ENCODE measurements at regions of chr18 and their contacts with region 1.

Region 1: GRCh38 chr18:3297025-3297984 is 35.4 kb downstream of the MYL12B start:
- DNase-seq: peak; percentile 88 to 95 (median 90)
- H3K4me3 ChIP-seq: peak overlapping the region; percentile 71 to 86
- H3K4me3 Mint-ChIP-seq: peak overlapping the region; percentile 91 to 98 (median 94)
- H3K27ac ChIP-seq: peak overlapping the region; percentile 44
- H3K27ac Mint-ChIP-seq: peak overlapping the region; percentile 51 to 96 (median 90)
- H3K4me1 ChIP-seq: peaks cover 9% of the 10 kb centered on the region
- H3K4me1 Mint-ChIP-seq: peaks cover 2 to 15% (median 10%) of the 10 kb centered on the region in 4 donors
- H3K27me3 ChIP-seq: no peaks in the 10 kb centered on the region
- H3K27me3 Mint-ChIP-seq: peaks cover 8 to 13% of the 10 kb centered on the region in 2 donors

Region 2: GRCh38 chr18:2935438-2936192 is 361.7 kb before region 1 on chr18:
- CTCF ChIA-PET with region 1: no interaction called
- POLR2A ChIA-PET with region 1: no interaction called
- intact Hi-C with region 1: no loop called
- DNase-seq: no peak
- H3K4me3 ChIP-seq: no peak overlapping the region
- H3K4me3 Mint-ChIP-seq: peak overlapping the region in 4 of 8 donors; percentile 2 to 40 (median 8)
- H3K27ac ChIP-seq: no peak overlapping the region
- H3K27ac Mint-ChIP-seq: peak overlapping the region; percentile 55 to 90 (median 82)
- H3K4me1 ChIP-seq: peaks cover 36% of the 10 kb centered on the region
- H3K4me1 Mint-ChIP-seq: peaks cover 31 to 48% (median 39%) of the 10 kb centered on the region in 4 donors
- H3K27me3 ChIP-seq: no peaks in the 10 kb centered on the region
- H3K27me3 Mint-ChIP-seq: no peaks in the 10 kb centered on the region

Region 3: GRCh38 chr18:3261371-3262246 is 35.7 kb before region 1 on chr18 and contains the start of gene MYL12B:
- CTCF ChIA-PET with region 1: interaction called, 6 read pairs
- POLR2A ChIA-PET with region 1: interaction called, 12 read pairs
- intact Hi-C with region 1: loop called (anchors 2 kb)
- DNase-seq: peak; percentile 83 to 91 (median 86)
- H3K4me3 ChIP-seq: peak within 1 kb of the TSS; percentile 89 to 94
- H3K4me3 Mint-ChIP-seq: peak within 1 kb of the TSS; percentile 94 to 100 (median 98)
- H3K27ac ChIP-seq: peak within 1 kb of the TSS; percentile 90
- H3K27ac Mint-ChIP-seq: peak within 1 kb of the TSS; percentile 98 to 100 (median 99)
- H3K4me1 ChIP-seq: peaks cover 81% of the 10 kb centered on the region
- H3K4me1 Mint-ChIP-seq: peaks cover 57 to 92% (median 70%) of the 10 kb centered on the region in 4 donors
- H3K27me3 ChIP-seq: no peaks in the 10 kb centered on the region
- H3K27me3 Mint-ChIP-seq: no peaks in the 10 kb centered on the region
- total RNA-seq, gene MYL12B: 199 to 219 TPM

Region 4: GRCh38 chr18:3281456-3282400 is 15.6 kb before region 1 on chr18:
- CTCF ChIA-PET with region 1: interaction called, 72 read pairs
- POLR2A ChIA-PET with region 1: interaction called, 3 read pairs
- intact Hi-C with region 1: no loop called
- DNase-seq: peak in 4 of 5 donors; percentile 69 to 73 (median 72)
- H3K4me3 ChIP-seq: no peak overlapping the region
- H3K4me3 Mint-ChIP-seq: no peak overlapping the region
- H3K27ac ChIP-seq: no peak overlapping the region
- H3K27ac Mint-ChIP-seq: no peak overlapping the region
- H3K4me1 ChIP-seq: no peaks in the 10 kb centered on the region
- H3K4me1 Mint-ChIP-seq: peaks cover 0 to 4% (median 1%) of the 10 kb centered on the region in 4 donors
- H3K27me3 ChIP-seq: no peaks in the 10 kb centered on the region
- H3K27me3 Mint-ChIP-seq: no peaks in the 10 kb centered on the region

Region 5: DNA sequence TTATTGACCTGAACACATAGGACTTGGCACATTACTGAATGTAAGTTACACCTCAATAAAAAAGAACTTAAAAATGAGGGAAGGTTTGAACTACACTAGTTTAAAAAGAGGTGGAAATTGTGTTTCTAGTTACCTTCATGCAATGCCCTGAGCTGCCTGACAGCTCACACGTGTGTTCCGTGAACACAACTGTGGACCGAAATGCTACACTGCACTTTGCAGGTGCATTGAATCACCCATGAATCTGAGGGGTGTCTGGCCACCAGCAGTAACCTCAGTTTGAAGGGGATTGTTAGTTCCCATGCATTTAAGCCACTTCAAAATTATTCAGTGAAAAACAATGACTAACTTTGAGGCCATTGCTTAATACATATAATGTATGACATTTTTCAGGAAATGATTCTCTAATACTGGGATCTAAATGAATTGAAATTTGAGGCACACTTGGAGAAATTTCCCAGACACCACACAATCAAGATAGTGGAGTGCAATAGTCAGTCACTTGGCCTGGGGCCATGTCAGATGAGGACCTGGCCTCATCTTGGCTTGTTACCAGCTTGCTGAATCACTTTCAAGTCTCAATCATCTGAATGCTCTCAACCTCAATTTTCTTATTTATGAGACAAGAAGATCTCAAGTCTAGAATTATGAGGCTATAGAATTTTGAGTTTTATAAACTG is 24.0 kb after region 1 on chr18:
- CTCF ChIA-PET with region 1: interaction called, 12 read pairs
- POLR2A ChIA-PET with region 1: no interaction called
- intact Hi-C with region 1: no loop called
- DNase-seq: no peak
- H3K4me3 ChIP-seq: no peak overlapping the region
- H3K4me3 Mint-ChIP-seq: no peak overlapping the region
- H3K27ac ChIP-seq: no peak overlapping the region
- H3K27ac Mint-ChIP-seq: peak overlapping the region in 1 of 7 donors; percentile 7
- H3K4me1 ChIP-seq: no peaks in the 10 kb centered on the region
- H3K4me1 Mint-ChIP-seq: peaks cover 0 to 2% (median 0%) of the 10 kb centered on the region in 4 donors
- H3K27me3 ChIP-seq: no peaks in the 10 kb centered on the region
- H3K27me3 Mint-ChIP-seq: peaks cover 6% of the 10 kb centered on the region in 2 donors

Region 6: DNA sequence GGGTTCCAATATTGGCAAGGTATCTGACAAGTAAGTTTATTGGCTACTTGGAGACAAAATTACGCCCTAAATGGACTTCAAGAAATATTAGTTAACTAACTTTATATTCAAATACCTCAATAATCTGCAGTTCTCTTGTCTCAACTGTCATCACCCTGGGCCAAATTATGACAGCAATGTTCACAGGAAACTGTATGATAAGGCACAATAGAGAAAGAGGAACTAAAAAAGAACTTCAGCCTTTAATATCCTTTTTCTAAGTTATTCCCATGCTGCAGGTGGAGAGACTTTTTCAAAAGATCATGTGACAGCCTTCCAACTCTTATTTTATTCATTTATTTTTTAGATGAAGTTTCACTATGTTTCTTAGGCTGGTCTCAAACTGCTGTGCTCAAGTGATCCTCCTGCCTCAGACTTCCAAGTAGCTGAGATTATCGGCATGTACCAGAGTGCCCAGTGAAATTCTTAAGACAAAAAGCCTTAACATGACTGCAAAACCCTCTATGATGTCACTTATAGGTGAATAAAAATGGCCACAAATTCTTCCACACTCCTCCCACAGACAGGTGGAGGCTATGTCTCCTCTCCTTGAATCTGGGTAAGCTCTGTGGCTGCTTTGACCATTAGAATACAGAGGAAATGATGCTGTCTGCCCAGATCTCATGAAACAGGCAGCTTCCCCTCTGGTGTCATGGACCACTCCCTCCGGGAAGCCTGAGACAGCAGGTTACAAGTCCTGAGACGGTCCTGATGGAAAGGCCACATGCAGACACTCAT is 363.6 kb after region 1 on chr18:
- CTCF ChIA-PET with region 1: interaction called, 69 read pairs
- POLR2A ChIA-PET with region 1: no interaction called
- intact Hi-C with region 1: no loop called
- DNase-seq: no peak
- H3K4me3 ChIP-seq: no peak overlapping the region
- H3K4me3 Mint-ChIP-seq: no peak overlapping the region
- H3K27ac ChIP-seq: no peak overlapping the region
- H3K27ac Mint-ChIP-seq: no peak overlapping the region
- H3K4me1 ChIP-seq: peaks cover 2% of the 10 kb centered on the region
- H3K4me1 Mint-ChIP-seq: peaks cover 0 to 4% (median 4%) of the 10 kb centered on the region in 4 donors
- H3K27me3 ChIP-seq: no peaks in the 10 kb centered on the region
- H3K27me3 Mint-ChIP-seq: peaks cover 2 to 3% of the 10 kb centered on the region in 2 donors